ENCODE measurements at regions of chr6 and their contacts with region 1.

Region 1: GRCh38 chr6:156953479-156954146 is 176.4 kb downstream of the ARID1B start:
- DNase-seq: no peak
- H3K4me3 Mint-ChIP-seq: no peak overlapping the region
- H3K27ac Mint-ChIP-seq: no peak overlapping the region
- H3K4me1 Mint-ChIP-seq: peaks cover 49% of the 10 kb centered on the region
- H3K27me3 Mint-ChIP-seq: no peaks in the 10 kb centered on the region

Region 2: DNA sequence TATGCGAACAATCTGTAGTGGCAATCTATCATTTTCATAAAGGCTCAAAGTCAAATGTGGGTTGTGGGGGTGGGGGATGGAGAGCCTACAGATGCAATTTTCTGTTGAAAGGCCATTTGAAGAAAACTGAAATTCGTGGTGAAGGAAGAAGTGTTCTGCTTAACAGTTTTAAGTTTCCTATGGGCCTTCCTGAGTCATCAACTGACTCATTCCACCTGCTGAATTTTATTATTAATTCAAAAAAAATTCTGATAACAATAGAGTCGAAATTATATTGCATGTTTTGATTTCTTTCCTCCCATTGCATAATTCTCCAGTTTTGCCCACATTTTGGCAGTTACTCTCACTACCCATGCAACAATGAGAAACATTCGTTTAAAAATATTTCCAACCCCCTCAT is 798.7 kb before region 1 on chr6:
- intact Hi-C with region 1: no loop called
- DNase-seq: no peak
- H3K4me3 Mint-ChIP-seq: no peak overlapping the region
- H3K27ac Mint-ChIP-seq: peak overlapping the region; percentile 50
- H3K4me1 Mint-ChIP-seq: peaks cover 14% of the 10 kb centered on the region
- H3K27me3 Mint-ChIP-seq: no peaks in the 10 kb centered on the region

Region 3: DNA sequence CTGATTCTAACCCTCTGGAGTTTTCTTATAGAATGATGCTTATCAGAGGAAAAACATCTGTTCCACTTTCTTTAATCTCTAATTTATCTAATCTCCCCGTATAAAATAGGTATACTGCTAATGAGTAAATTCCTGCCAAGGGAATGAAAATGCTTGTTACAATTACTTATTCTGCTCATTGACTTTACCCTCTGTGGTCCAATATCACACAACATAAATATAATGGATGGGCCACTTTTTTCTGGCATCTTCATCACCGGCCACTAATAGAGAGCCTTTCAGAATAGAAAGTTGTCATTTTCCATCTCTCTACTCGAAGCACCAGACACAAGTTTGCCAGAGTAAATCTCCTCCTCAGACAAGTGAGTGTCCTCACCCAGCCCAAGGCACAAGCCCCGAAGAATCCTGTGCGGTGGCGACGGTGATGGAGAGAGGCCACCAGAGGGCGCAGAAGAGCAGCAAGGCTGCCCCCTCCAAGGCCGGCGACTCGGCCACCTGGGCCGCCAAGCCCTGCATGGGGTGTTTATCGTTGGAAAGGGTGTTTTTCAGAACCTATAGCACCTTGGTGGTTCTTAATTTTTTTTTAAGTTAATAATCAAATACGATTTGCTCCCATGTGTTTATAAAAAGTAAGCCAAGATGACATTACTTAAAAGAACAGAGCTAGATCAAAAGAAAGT is 389.3 kb before region 1 on chr6:
- intact Hi-C with region 1: loop called (anchors 5 kb)
- DNase-seq: peak; percentile 61
- H3K4me3 Mint-ChIP-seq: no peak overlapping the region
- H3K27ac Mint-ChIP-seq: no peak overlapping the region
- H3K4me1 Mint-ChIP-seq: peaks cover 7% of the 10 kb centered on the region
- H3K27me3 Mint-ChIP-seq: peaks cover 5% of the 10 kb centered on the region

Region 4: GRCh38 chr6:156686995-156687788 is 266.4 kb before region 1 on chr6:
- intact Hi-C with region 1: loop called (anchors 10 kb)
- DNase-seq: peak; percentile 75
- H3K4me3 Mint-ChIP-seq: peak overlapping the region; percentile 84
- H3K27ac Mint-ChIP-seq: peak overlapping the region; percentile 73
- H3K4me1 Mint-ChIP-seq: peaks cover 29% of the 10 kb centered on the region
- H3K27me3 Mint-ChIP-seq: peaks cover 24% of the 10 kb centered on the region

Region 5: DNA sequence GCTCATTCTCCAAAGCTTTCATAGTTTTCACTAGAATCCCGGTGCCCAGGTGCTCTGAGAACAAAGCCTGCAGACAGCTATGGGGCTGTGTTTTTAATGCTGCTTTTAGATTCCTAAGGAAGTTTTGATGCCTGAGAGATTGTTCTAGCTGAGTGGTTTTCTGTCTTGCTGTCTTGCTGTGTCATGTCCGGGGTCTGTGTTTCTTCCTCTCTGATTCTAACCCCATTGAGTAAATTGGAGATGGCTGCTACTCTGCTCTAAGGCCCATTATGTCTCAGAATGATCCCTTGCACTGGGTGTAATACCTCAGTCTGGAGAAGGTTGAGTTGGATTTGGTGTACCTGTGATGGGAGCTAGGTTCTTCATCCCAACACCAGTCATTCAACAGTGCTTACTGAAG is 113.0 kb before region 1 on chr6:
- intact Hi-C with region 1: no loop called
- DNase-seq: no peak
- H3K4me3 Mint-ChIP-seq: no peak overlapping the region
- H3K27ac Mint-ChIP-seq: no peak overlapping the region
- H3K4me1 Mint-ChIP-seq: peaks cover 21% of the 10 kb centered on the region
- H3K27me3 Mint-ChIP-seq: no peaks in the 10 kb centered on the region

Region 6: GRCh38 chr6:156857573-156857972 is 96.0 kb before region 1 on chr6:
- intact Hi-C with region 1: loop called (anchors 5 kb)
- DNase-seq: no peak
- H3K4me3 Mint-ChIP-seq: no peak overlapping the region
- H3K27ac Mint-ChIP-seq: peak overlapping the region; percentile 74
- H3K4me1 Mint-ChIP-seq: peaks cover 49% of the 10 kb centered on the region
- H3K27me3 Mint-ChIP-seq: no peaks in the 10 kb centered on the region

Region 7: GRCh38 chr6:156925718-156926615 is 27.6 kb before region 1 on chr6:
- intact Hi-C with region 1: loop called (anchors 1 kb)
- DNase-seq: no peak
- H3K4me3 Mint-ChIP-seq: no peak overlapping the region
- H3K27ac Mint-ChIP-seq: peak overlapping the region; percentile 47
- H3K4me1 Mint-ChIP-seq: peaks cover 33% of the 10 kb centered on the region
- H3K27me3 Mint-ChIP-seq: no peaks in the 10 kb centered on the region

Region 8: GRCh38 chr6:156933201-156934068 is 20.2 kb before region 1 on chr6:
- intact Hi-C with region 1: loop called (anchors 1 kb)
- DNase-seq: no peak
- H3K4me3 Mint-ChIP-seq: no peak overlapping the region
- H3K27ac Mint-ChIP-seq: peak overlapping the region; percentile 20
- H3K4me1 Mint-ChIP-seq: peaks cover 38% of the 10 kb centered on the region
- H3K27me3 Mint-ChIP-seq: no peaks in the 10 kb centered on the region

Region 9: DNA sequence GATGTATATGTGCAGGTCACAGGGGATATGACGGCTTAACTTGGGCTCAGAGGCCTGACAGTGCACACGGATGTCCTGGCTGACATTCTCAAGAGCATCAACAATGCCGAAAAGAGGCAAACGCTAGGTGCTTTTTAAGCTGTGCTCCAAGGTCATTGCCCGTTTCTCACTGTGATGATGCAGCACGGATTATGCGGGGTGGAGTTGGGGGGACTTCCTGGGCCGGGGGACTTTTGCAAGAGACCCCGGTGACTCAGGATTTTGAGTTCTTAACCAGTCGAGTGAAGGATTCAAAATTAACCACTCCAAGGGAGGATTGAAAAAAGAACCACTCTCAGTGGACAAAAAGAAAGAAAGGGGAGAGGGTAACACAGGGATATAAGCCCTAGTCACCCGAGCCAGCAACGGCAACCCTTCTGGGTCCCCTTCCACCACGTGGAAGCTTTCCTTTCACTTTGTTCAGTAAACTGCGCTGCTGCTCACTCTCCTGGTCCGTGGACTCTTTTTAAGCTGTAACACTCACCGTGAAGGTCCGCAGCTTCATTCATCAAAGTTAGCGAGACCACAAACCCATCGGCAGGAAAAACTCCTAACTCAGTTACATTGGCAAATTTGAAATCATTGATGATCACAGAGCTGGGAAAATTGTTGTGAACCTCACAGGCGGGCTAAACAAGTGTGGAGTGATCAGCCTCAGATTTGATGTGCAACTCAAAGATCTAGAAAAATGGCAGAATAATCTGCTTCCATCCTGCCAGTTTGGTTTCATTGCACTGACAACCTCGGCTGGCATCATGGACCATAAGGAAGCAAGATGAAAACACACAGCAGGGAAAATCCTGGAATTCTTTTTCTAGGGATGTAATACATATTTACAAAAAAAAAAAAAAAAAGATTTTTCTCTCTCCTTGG is 22.9 kb after region 1 on chr6:
- intact Hi-C with region 1: loop called (anchors 1 kb)
- DNase-seq: no peak
- H3K4me3 Mint-ChIP-seq: peak overlapping the region; percentile 74
- H3K27ac Mint-ChIP-seq: peak overlapping the region; percentile 83
- H3K4me1 Mint-ChIP-seq: peaks cover 50% of the 10 kb centered on the region
- H3K27me3 Mint-ChIP-seq: no peaks in the 10 kb centered on the region

Region 10: DNA sequence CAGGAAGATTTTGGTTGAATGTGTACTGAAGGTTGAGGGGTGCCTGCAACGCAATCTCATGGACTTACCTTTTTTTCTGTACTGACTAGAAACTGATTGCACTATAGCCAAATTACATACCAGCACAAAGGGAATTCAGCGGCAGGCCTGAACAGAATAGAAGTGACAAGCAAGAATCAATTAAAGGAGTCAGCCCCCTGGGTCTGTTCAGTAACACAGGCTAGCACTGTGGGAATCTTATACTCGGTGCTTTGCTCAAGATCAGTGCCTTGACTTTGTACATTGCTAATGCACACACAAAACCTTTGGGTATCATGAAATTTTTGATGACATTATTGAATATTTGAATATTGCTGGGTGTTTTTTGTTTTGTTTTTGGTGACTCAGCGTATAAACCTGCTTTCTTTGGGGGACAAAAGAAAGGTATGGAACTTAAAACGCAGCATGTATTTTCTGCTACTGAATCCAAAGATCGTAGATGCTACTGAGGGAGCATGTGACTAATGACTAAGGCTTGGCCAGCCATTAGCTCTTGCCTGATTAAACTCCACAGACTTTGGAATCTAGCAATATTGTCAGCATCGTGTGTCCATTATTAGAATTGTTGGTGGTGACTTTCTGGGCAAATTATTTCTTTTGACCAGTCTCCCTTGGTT is 60.2 kb after region 1 on chr6:
- intact Hi-C with region 1: no loop called
- DNase-seq: no peak
- H3K4me3 Mint-ChIP-seq: no peak overlapping the region
- H3K27ac Mint-ChIP-seq: no peak overlapping the region
- H3K4me1 Mint-ChIP-seq: peaks cover 24% of the 10 kb centered on the region
- H3K27me3 Mint-ChIP-seq: no peaks in the 10 kb centered on the region

Region 11: GRCh38 chr6:157079771-157080170 is 126.2 kb after region 1 on chr6:
- intact Hi-C with region 1: no loop called
- DNase-seq: no peak
- H3K4me3 Mint-ChIP-seq: no peak overlapping the region
- H3K27ac Mint-ChIP-seq: no peak overlapping the region
- H3K4me1 Mint-ChIP-seq: peaks cover 36% of the 10 kb centered on the region
- H3K27me3 Mint-ChIP-seq: no peaks in the 10 kb centered on the region